ENCODE measurements at regions of chr7 and their contacts with region 1.

Region 1: DNA sequence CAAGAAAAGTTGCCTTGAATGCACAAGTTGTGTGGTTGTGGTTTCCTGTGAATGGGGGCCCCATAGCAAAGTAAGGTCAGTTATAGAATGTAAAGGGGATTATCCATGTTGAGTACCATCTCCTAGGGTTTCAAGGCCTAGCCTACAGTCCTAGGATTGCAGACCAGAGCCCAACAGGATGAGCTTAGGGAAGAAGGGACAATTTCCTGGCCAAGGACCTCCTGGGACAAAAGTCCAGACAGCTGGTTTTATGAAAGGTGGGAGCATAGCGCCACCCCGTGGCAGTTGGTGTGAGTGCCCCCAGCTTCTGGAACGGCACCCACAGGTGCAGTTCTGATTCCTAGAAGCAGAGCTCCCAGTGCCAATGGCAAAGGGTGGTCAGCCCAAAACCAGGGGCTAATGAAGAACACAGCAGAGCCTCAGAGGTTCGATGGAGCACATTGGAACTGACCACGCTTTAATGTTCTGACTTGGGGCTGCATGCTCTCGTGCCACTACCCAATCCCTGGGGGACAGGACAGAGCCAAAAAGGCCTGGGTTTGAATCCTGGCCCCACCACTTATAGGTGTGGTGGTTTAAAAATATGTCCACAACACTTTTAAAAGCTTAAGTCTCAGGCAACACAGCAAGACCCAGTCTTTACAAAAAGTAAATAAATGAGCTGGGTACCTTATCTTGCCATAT is 25.8 kb upstream of the TMEM120A start:
- DNase-seq: peak; percentile 58 to 76 (median 74)
- H3K4me3 ChIP-seq: no peak overlapping the region
- H3K4me3 Mint-ChIP-seq: no peak overlapping the region
- H3K27ac ChIP-seq: no peak overlapping the region
- H3K27ac Mint-ChIP-seq: peak overlapping the region in 1 of 7 donors; percentile 76
- H3K4me1 ChIP-seq: peaks cover 16 to 18% of the 10 kb centered on the region in 2 donors
- H3K4me1 Mint-ChIP-seq: peaks cover 17% of the 10 kb centered on the region
- H3K27me3 ChIP-seq: no peaks in the 10 kb centered on the region
- H3K27me3 Mint-ChIP-seq: peaks cover 0 to 2% (median 1%) of the 10 kb centered on the region in 3 donors
- CTCF ChIP-seq: peak; percentile 93

Region 2: DNA sequence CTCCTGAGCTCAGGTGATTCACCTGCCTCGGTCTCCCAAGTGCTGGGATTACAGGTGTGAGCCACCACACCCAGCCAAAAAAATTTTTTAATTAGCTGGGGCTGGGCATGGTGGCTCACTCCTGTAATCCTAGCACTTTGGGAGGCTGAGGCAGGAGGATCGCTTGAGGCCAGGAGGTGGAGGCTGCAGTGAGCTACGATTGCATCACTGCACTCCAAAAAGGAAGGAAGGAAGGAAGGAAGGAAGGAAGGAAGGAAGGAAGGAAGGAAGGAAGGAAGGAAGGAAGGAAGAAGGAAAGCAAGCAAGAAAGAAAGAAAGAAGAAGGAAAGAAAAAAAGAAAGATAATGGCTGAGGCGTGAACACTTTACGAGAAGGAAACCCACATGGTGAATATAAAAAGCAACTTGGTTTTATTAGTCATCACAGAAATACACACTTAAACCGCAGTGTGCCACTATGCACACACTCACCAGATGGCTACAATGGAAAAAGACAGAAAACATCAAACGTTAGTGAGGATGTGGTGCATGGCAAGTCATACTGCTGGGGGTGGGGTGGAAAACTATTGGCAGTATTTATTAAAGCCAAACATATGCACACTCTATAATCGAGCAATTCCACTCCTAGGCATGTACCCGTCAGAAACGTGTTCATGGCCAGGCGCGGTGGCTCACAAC is 243.7 kb before region 1 on chr7:
- intact Hi-C with region 1: loop called (anchors 10 kb)
- DNase-seq: peak in 2 of 3 donors; percentile 4 to 11
- H3K4me3 ChIP-seq: no peak overlapping the region
- H3K4me3 Mint-ChIP-seq: no peak overlapping the region
- H3K27ac ChIP-seq: no peak overlapping the region
- H3K27ac Mint-ChIP-seq: peak overlapping the region in 1 of 7 donors; percentile 66
- H3K4me1 ChIP-seq: peaks cover 6 to 11% of the 10 kb centered on the region in 2 donors
- H3K4me1 Mint-ChIP-seq: peaks cover 18% of the 10 kb centered on the region
- H3K27me3 ChIP-seq: peaks cover 0 to 2% of the 10 kb centered on the region in 2 donors
- H3K27me3 Mint-ChIP-seq: peaks cover 11 to 15% (median 11%) of the 10 kb centered on the region in 3 donors
- CTCF ChIP-seq: no peak

Region 3: GRCh38 chr7:75866489-75867389 is 153.4 kb before region 1 on chr7:
- intact Hi-C with region 1: loop called (anchors 2 kb)
- DNase-seq: peak; percentile 62 to 79 (median 78)
- H3K4me3 ChIP-seq: no peak overlapping the region
- H3K4me3 Mint-ChIP-seq: peak overlapping the region in 1 of 2 donors; percentile 48
- H3K27ac ChIP-seq: no peak overlapping the region
- H3K27ac Mint-ChIP-seq: peak overlapping the region in 4 of 7 donors; percentile 41 to 81 (median 67)
- H3K4me1 ChIP-seq: peaks cover 29% of the 10 kb centered on the region in 2 donors
- H3K4me1 Mint-ChIP-seq: peaks cover 48% of the 10 kb centered on the region
- H3K27me3 ChIP-seq: no peaks in the 10 kb centered on the region
- H3K27me3 Mint-ChIP-seq: peaks cover 6 to 10% (median 6%) of the 10 kb centered on the region in 3 donors
- CTCF ChIP-seq: peak; percentile 92

Region 4: GRCh38 chr7:75989500-75990388 is 30.4 kb before region 1 on chr7:
- intact Hi-C with region 1: no loop called
- DNase-seq: no peak
- H3K4me3 ChIP-seq: no peak overlapping the region
- H3K4me3 Mint-ChIP-seq: no peak overlapping the region
- H3K27ac ChIP-seq: no peak overlapping the region
- H3K27ac Mint-ChIP-seq: peak overlapping the region in 4 of 7 donors; percentile 19 to 60 (median 36)
- H3K4me1 ChIP-seq: peaks cover 9 to 15% of the 10 kb centered on the region in 2 donors
- H3K4me1 Mint-ChIP-seq: peaks cover 19% of the 10 kb centered on the region
- H3K27me3 ChIP-seq: no peaks in the 10 kb centered on the region
- H3K27me3 Mint-ChIP-seq: no peaks in the 10 kb centered on the region
- CTCF ChIP-seq: no peak

Region 5: DNA sequence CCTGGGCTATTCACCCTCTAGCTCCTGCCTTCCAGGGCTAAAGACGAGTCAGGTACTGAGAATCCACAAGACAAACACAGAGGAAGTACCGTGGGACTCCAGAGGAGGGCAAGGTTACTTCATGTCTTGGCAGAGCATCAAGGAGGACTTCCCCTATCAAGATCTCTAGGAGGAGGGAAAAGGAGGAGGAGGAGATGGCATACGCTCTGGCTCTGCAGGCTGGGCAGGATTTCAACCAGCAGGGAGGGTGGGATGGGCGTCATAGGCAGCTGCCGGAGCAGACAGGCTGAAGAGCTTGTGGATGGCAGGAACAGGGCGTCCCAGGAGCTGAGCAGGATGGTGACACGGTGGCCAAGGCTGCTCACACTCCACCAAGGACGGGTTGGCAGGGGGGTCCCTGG is 49.1 kb after region 1 on chr7:
- intact Hi-C with region 1: no loop called
- DNase-seq: peak; percentile 27 to 45 (median 42)
- H3K4me3 ChIP-seq: no peak overlapping the region
- H3K4me3 Mint-ChIP-seq: no peak overlapping the region
- H3K27ac ChIP-seq: no peak overlapping the region
- H3K27ac Mint-ChIP-seq: peak overlapping the region in 1 of 7 donors; percentile 79
- H3K4me1 ChIP-seq: peaks cover 0 to 4% of the 10 kb centered on the region in 2 donors
- H3K4me1 Mint-ChIP-seq: peaks cover 8% of the 10 kb centered on the region
- H3K27me3 ChIP-seq: no peaks in the 10 kb centered on the region
- H3K27me3 Mint-ChIP-seq: peaks cover 0 to 1% (median 0%) of the 10 kb centered on the region in 3 donors
- CTCF ChIP-seq: no peak

Region 6: GRCh38 chr7:76086070-76086469 is 65.9 kb after region 1 on chr7:
- intact Hi-C with region 1: no loop called
- DNase-seq: no peak
- H3K4me3 ChIP-seq: no peak overlapping the region
- H3K4me3 Mint-ChIP-seq: no peak overlapping the region
- H3K27ac ChIP-seq: no peak overlapping the region
- H3K27ac Mint-ChIP-seq: no peak overlapping the region
- H3K4me1 ChIP-seq: no peaks in the 10 kb centered on the region
- H3K4me1 Mint-ChIP-seq: no peaks in the 10 kb centered on the region
- H3K27me3 ChIP-seq: no peaks in the 10 kb centered on the region
- H3K27me3 Mint-ChIP-seq: peaks cover 1 to 7% (median 5%) of the 10 kb centered on the region in 3 donors
- CTCF ChIP-seq: no peak